B cell (primary cell): ENCODE measurements at regions of chr2 and their contacts with region 1.

Region 1: GRCh38 chr2:197198890-197199289 is 111.7 kb downstream of the ANKRD44 start:
- DNase-seq: peak; percentile 93
- ATAC-seq: peak; percentile 96
- H3K4me3 ChIP-seq: peak overlapping the region; percentile 30 to 60 (median 57)
- H3K4me3 Mint-ChIP-seq: peak overlapping the region; percentile 93
- H3K27ac ChIP-seq: peak overlapping the region; percentile 68 to 86
- H3K27ac Mint-ChIP-seq: peak overlapping the region; percentile 97
- H3K4me1 ChIP-seq: peaks cover 68 to 71% of the 10 kb centered on the region in 2 donors
- H3K4me1 Mint-ChIP-seq: peaks cover 84% of the 10 kb centered on the region
- H3K27me3 ChIP-seq: no peaks in the 10 kb centered on the region
- H3K27me3 Mint-ChIP-seq: no peaks in the 10 kb centered on the region
- CTCF ChIP-seq: no peak

Region 2: DNA sequence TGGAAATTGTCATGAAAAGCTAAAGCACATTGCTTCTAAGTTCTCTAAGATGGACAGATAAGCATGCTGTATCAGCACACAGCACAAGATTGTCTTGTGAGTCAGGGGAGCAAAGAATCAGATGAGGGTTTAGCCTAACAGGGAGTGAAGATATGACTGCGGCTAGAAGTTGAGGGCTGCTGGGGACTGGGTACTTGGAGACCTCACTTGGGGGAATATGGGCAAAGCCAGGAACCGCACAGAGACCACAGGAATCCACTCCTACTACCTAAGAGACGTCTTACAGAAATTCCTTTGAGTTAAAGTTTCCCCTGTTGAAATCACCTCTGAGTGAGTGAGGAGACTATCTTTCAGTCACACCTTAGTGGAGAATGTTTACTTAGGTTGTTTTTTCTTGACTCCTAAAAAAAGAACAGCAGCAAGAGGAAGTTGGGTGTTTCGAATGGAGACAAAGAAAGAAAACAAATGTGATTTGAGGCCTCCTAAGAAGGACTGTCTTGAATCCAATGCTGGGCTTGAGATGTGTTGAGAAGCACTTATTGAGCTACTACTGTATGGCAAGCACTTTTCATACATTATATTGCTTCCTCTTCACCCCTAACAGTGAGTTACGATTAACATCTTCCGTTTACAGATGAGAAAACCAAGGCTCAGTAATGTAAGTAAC is 11.0 kb after region 1 on chr2:
- CTCF ChIA-PET with region 1: interaction called, 12 read pairs
- POLR2A ChIA-PET with region 1: interaction called, 10 read pairs
- intact Hi-C with region 1: loop called (anchors 1 kb)
- DNase-seq: peak; percentile 74
- ATAC-seq: peak; percentile 37
- H3K4me3 ChIP-seq: peak overlapping the region in 3 of 5 experiments; percentile 10 to 27 (median 21)
- H3K4me3 Mint-ChIP-seq: peak overlapping the region; percentile 84
- H3K27ac ChIP-seq: peak overlapping the region; percentile 94 to 95
- H3K27ac Mint-ChIP-seq: peak overlapping the region; percentile 99
- H3K4me1 ChIP-seq: peaks cover 92 to 99% of the 10 kb centered on the region in 2 donors
- H3K4me1 Mint-ChIP-seq: peaks cover 96% of the 10 kb centered on the region
- H3K27me3 ChIP-seq: no peaks in the 10 kb centered on the region
- H3K27me3 Mint-ChIP-seq: no peaks in the 10 kb centered on the region
- CTCF ChIP-seq: no peak

Region 3: DNA sequence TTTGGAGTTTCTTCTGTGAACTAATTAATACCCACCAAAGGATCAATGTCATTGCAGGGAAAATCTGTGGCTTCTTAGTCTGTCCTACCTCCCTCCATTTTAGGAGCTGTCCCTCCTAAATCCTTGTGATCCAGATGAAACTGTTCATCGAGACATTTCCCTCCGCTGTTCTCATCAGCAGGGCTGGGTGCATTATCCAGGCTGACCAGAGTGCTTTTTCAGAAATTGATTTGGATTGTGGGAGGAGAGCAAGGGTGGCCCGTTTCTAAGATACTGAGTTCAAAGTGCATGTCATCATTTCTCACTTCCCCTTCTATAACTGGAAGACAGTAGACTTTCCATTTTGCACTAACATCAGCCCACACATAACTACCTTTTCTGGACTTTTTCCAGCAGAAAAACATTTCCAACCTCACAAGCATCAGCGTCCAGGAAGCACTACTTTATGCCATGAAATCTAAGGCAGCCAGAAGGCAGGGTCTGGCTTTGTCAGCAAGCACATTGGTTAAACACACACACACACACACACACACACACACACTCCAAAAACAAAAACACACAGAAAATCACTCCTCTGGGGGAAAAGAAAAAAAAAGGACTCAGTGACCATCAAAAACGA is 17.6 kb after region 1 on chr2:
- CTCF ChIA-PET with region 1: interaction called, 10 read pairs
- POLR2A ChIA-PET with region 1: interaction called, 3 read pairs
- intact Hi-C with region 1: loop called (anchors 2 kb)
- DNase-seq: peak; percentile 76
- ATAC-seq: peak; percentile 70
- H3K4me3 ChIP-seq: peak overlapping the region in 1 of 5 experiments; percentile 15
- H3K4me3 Mint-ChIP-seq: peak overlapping the region; percentile 75
- H3K27ac ChIP-seq: peak overlapping the region; percentile 68 to 95
- H3K27ac Mint-ChIP-seq: peak overlapping the region; percentile 92
- H3K4me1 ChIP-seq: peaks cover 82 to 89% of the 10 kb centered on the region in 2 donors
- H3K4me1 Mint-ChIP-seq: peaks cover 83% of the 10 kb centered on the region
- H3K27me3 ChIP-seq: no peaks in the 10 kb centered on the region
- H3K27me3 Mint-ChIP-seq: no peaks in the 10 kb centered on the region
- CTCF ChIP-seq: no peak

Region 4: DNA sequence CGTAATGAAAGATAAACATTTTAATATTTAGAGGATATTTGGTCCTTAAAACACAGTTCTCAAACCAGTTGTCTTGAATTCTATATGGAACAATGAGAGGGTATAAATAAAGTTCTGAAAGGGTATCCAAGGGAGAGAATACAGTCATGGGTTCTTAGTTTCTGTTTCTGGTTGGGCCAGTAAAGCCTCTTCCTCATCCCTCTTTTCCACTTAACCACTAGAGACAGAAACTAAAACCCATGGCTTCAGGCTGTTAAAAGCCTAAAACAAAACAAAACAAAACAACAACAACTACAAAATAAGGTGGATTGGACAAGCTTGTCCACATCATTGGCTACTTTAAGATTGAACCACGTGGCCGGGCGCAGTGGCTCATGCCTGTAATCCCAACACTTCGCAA is 273.3 kb after region 1 on chr2:
- CTCF ChIA-PET with region 1: no interaction called
- POLR2A ChIA-PET with region 1: no interaction called
- intact Hi-C with region 1: no loop called
- DNase-seq: no peak
- ATAC-seq: no peak
- H3K4me3 ChIP-seq: no peak overlapping the region
- H3K4me3 Mint-ChIP-seq: no peak overlapping the region
- H3K27ac ChIP-seq: no peak overlapping the region
- H3K27ac Mint-ChIP-seq: no peak overlapping the region
- H3K4me1 ChIP-seq: no peaks in the 10 kb centered on the region
- H3K4me1 Mint-ChIP-seq: no peaks in the 10 kb centered on the region
- H3K27me3 ChIP-seq: no peaks in the 10 kb centered on the region
- H3K27me3 Mint-ChIP-seq: no peaks in the 10 kb centered on the region
- CTCF ChIP-seq: no peak

Region 5: GRCh38 chr2:198016243-198016642 is 817.4 kb after region 1 on chr2:
- CTCF ChIA-PET with region 1: no interaction called
- POLR2A ChIA-PET with region 1: no interaction called
- intact Hi-C with region 1: no loop called
- DNase-seq: no peak
- ATAC-seq: no peak
- H3K4me3 ChIP-seq: no peak overlapping the region
- H3K4me3 Mint-ChIP-seq: no peak overlapping the region
- H3K27ac ChIP-seq: no peak overlapping the region
- H3K27ac Mint-ChIP-seq: no peak overlapping the region
- H3K4me1 ChIP-seq: no peaks in the 10 kb centered on the region
- H3K4me1 Mint-ChIP-seq: no peaks in the 10 kb centered on the region
- H3K27me3 ChIP-seq: no peaks in the 10 kb centered on the region
- H3K27me3 Mint-ChIP-seq: peaks cover 3% of the 10 kb centered on the region
- CTCF ChIP-seq: no peak